Activated CD4-positive, alpha-beta T cell treated with anti-CD3 and anti-CD28 coated beads, Interleukin-2, amount 10 ng/mL, durations not matched to agents 24 days and 14 days (primary cell): ENCODE measurements at regions of chr3 and their contacts with region 1.

Region 1: DNA sequence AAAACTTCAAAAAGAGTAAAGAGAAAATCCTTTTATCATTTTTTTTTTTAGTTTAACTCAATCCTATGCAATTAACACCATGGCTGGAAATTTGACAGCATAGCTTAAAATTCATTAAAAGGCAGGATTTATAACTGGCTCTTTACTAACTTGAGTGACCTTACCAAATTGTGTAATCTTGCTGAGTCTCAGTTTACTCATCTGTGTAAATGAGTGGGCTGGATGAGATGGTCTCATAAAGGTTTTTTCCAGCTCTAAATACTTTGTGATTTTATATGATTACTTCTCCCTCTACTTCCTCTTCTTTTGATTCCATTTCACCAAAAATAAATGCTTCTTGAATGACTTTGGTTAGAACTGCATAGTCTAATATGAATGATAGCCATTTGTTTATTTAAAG is 234.9 kb upstream of the SATB1 start:
- DNase-seq: no peak
- H3K4me3 Mint-ChIP-seq: no peak overlapping the region
- H3K27ac Mint-ChIP-seq: no peak overlapping the region
- H3K4me1 Mint-ChIP-seq: peaks cover 53% of the 10 kb centered on the region
- H3K27me3 Mint-ChIP-seq: no peaks in the 10 kb centered on the region

Region 2: GRCh38 chr3:18649666-18650363 is 10.2 kb before region 1 on chr3:
- intact Hi-C with region 1: loop called (anchors 1 kb)
- DNase-seq: peak; percentile 89
- H3K4me3 Mint-ChIP-seq: peak overlapping the region; percentile 61
- H3K27ac Mint-ChIP-seq: peak overlapping the region; percentile 93
- H3K4me1 Mint-ChIP-seq: peaks cover 73% of the 10 kb centered on the region
- H3K27me3 Mint-ChIP-seq: no peaks in the 10 kb centered on the region

Region 3: DNA sequence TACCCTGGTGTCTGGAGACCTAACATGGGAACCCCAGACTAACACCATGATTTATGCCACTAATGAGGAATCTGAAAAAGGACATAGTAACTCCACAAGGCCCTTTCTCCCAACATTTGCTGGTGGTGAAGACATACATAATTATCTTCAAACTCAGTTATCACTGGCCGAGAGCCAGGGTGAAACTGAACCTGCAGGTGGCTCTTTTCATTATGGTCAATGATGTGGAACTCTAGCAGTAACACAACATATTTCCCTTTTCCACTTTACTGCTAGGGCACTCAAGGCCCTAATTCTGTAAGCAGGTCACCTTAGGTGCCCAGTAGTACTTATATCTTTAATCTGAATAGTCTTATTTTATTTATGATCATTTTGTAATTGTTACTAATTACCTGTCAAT is 91.5 kb after region 1 on chr3:
- intact Hi-C with region 1: no loop called
- DNase-seq: no peak
- H3K4me3 Mint-ChIP-seq: no peak overlapping the region
- H3K27ac Mint-ChIP-seq: no peak overlapping the region
- H3K4me1 Mint-ChIP-seq: peaks cover 55% of the 10 kb centered on the region
- H3K27me3 Mint-ChIP-seq: no peaks in the 10 kb centered on the region

Region 4: GRCh38 chr3:18864933-18865731 is 205.1 kb after region 1 on chr3:
- intact Hi-C with region 1: no loop called
- DNase-seq: no peak
- H3K4me3 Mint-ChIP-seq: no peak overlapping the region
- H3K27ac Mint-ChIP-seq: no peak overlapping the region
- H3K4me1 Mint-ChIP-seq: peaks cover 14% of the 10 kb centered on the region
- H3K27me3 Mint-ChIP-seq: peaks cover under 1% of the 10 kb centered on the region